ENCODE measurements at regions of chr7 and their contacts with region 1.

Region 1: GRCh38 chr7:76359111-76359978 is 554 bp upstream of the YWHAG start:
- DNase-seq: peak; percentile 98 to 99
- ATAC-seq: peak; percentile 91 to 93
- H3K4me3 ChIP-seq: peak overlapping the region; percentile 81 to 97 (median 90)
- H3K27ac ChIP-seq: peak overlapping the region; percentile 96 to 100 (median 98)
- H3K4me1 ChIP-seq: peaks cover 41 to 43% of the 10 kb centered on the region in 2 donors
- H3K27me3 ChIP-seq: no peaks in the 10 kb centered on the region
- CTCF ChIP-seq: peak; percentile 69 to 91 (median 83)
- POLR2A ChIP-seq: no peak

Region 2: GRCh38 chr7:76282344-76283253 is 76.7 kb before region 1 on chr7:
- in situ Hi-C with region 1: no loop called
- intact Hi-C with region 1: no loop called
- DNase-seq: no peak
- ATAC-seq: peak in 1 of 2 donors; percentile 19
- H3K4me3 ChIP-seq: peak overlapping the region; percentile 36 to 55 (median 48)
- H3K27ac ChIP-seq: no peak overlapping the region
- H3K4me1 ChIP-seq: peaks cover 4 to 5% of the 10 kb centered on the region in 2 donors
- H3K27me3 ChIP-seq: peaks cover 21 to 30% (median 22%) of the 10 kb centered on the region in 3 donors
- CTCF ChIP-seq: no peak
- POLR2A ChIP-seq: peak in 1 of 2 donors; percentile 16

Region 3: DNA sequence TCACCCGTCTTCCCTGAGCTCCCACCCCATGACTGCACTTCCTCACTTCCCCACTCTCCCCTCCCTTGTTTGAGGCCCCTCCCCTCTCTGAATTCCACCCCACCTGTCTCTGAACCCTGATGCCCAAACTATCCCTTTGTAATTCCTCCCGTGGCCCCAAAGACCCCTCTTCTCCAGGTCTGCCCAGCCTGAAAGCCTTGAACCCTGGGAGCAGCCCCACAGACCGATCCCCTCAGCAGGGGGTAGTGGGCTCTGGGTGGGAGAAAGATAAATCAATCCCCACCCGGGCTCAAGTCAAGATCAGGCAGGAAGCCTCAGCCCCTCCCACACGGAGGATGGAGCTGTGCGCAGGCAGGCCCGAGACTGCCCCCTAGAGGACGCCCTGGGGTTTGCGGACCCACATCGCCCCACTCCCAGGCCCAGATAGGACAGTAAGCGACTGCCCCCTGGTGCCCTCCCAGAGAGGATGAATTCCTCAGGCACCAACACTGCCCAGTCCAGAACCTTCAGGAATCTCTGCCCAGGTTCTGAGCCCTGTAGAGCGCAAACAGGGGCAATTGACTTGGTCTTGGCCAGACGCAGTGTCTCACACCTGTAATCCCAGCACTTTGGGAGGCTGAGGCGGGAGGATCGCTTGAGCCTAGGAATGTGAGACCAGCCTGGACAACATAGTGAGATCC is 45.2 kb before region 1 on chr7:
- in situ Hi-C with region 1: loop called in 1 of 4 experiments (anchors 5 kb)
- intact Hi-C with region 1: loop called (anchors 1 kb)
- DNase-seq: peak; percentile 94 to 95
- ATAC-seq: peak; percentile 62 to 64
- H3K4me3 ChIP-seq: no peak overlapping the region
- H3K27ac ChIP-seq: peak overlapping the region; percentile 70 to 85 (median 82)
- H3K4me1 ChIP-seq: peaks cover 29 to 33% of the 10 kb centered on the region in 2 donors
- H3K27me3 ChIP-seq: no peaks in the 10 kb centered on the region
- CTCF ChIP-seq: peak; percentile 100
- POLR2A ChIP-seq: no peak

Region 4: DNA sequence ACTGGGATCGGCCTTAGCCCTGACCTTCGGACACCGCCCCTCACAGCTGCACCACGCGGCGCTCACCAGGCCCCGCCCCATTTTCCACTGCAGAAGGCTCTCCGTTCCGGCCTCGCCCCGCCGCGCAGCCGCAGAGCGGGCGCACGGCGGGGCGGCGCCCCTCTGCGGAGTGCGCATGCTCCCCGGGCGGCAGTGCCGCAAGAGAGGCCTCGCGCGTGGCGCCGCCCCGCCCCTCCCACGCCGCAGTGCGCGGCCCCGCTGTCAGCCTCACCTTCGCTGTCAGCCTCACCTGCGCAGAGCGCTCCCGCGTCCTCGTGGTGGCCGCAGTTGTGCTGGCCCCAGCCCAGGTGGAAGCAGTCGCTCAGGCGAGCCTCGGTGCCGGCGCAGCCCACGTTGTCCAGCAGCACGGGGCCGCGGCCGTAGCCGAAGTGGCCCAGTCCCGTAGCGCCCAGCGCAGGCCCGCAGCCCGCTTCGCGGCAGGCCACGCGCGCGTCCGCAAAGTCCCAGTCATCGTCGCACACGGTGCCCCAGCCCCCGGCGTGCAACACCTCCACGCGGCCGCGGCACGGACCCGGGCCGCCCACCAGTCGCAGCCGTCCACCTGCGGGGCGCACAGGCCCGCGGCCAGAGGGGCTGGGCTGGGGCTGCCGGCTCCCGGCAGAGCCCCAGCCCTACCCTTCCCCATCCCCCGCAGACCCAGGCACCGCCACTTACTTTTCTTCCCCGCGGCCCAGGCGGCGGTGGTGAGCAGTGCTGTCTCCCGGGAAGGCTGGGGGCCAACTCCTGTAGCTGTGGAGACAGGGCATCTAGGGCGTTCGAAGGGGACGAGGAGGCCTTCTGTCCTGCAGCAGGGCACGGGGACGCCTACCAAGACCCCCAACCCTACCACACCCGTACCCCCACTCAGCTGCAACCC is 34.0 kb after region 1 on chr7:
- in situ Hi-C with region 1: no loop called
- intact Hi-C with region 1: loop called (anchors 1 kb)
- DNase-seq: peak; percentile 87 to 95
- ATAC-seq: peak; percentile 88 to 89
- H3K4me3 ChIP-seq: peak overlapping the region; percentile 66 to 89 (median 72)
- H3K27ac ChIP-seq: peak overlapping the region; percentile 83 to 96 (median 88)
- H3K4me1 ChIP-seq: peaks cover 19 to 20% of the 10 kb centered on the region in 2 donors
- H3K27me3 ChIP-seq: no peaks in the 10 kb centered on the region
- CTCF ChIP-seq: peak in 1 of 5 experiments; percentile 19
- POLR2A ChIP-seq: peak; percentile 89 to 91